Naive thymus-derived CD4-positive, alpha-beta T cell (primary cell): ENCODE measurements at regions of chr15 and their contacts with region 1.

Region 1: DNA sequence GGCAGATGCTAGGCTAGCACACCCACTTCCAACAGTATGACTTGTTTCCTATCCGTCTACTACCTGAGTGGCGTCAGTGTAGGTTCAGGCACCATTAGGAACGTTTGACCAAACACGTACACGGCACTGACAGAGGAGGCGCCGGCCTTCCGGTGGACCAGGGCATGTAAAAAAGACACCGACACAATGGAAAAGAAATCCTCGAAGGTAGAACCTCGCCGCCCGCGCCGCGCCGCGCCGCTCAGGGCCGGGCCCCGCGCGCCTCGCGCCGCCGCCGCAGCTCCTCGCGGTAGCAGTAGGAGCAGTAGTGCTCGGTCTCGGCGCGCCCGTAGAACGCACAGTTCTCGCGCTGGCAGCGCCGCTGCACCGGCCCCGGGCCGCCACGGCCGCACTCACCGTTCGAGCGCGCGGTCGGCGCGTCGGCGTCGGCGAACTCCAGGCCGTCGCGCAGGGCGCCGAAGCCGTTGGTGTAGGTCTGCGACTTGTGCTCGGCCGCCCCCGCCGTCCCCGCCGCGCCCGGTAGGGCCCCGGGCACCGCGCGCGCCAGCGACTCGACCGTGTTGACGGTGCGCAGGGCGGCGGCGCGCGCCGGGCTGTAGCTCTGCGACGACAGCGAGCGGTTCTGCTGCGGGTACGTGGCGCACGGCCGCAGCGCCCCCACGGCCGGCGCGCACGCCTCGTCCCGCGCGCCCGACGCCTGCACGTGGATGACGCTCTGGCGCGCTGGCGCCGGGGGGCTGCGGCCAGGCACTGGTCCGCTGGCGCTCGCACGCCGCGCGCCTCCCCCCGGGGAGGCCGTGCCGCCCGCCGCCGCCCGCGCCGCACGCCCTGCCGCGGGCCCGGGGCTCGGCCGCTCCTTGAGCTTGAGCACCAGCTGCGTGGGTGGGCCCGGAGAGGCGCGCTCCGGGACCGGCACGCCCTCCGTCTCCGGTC is 156.7 kb downstream of the KLF13 start:
- DNase-seq: peak; percentile 42 to 63 (median 53)
- ATAC-seq: peak; percentile 80
- H3K4me3 ChIP-seq: peak overlapping the region; percentile 59
- H3K4me3 Mint-ChIP-seq: peak overlapping the region; percentile 91 to 97 (median 96)
- H3K27ac ChIP-seq: no peak overlapping the region
- H3K27ac Mint-ChIP-seq: peak overlapping the region; percentile 90 to 97 (median 94)
- H3K4me1 ChIP-seq: peaks cover 26 to 35% of the 10 kb centered on the region in 2 donors
- H3K4me1 Mint-ChIP-seq: peaks cover 25 to 75% (median 54%) of the 10 kb centered on the region in 7 donors
- H3K27me3 ChIP-seq: no peaks in the 10 kb centered on the region
- H3K27me3 Mint-ChIP-seq: no peaks in the 10 kb centered on the region

Region 2: DNA sequence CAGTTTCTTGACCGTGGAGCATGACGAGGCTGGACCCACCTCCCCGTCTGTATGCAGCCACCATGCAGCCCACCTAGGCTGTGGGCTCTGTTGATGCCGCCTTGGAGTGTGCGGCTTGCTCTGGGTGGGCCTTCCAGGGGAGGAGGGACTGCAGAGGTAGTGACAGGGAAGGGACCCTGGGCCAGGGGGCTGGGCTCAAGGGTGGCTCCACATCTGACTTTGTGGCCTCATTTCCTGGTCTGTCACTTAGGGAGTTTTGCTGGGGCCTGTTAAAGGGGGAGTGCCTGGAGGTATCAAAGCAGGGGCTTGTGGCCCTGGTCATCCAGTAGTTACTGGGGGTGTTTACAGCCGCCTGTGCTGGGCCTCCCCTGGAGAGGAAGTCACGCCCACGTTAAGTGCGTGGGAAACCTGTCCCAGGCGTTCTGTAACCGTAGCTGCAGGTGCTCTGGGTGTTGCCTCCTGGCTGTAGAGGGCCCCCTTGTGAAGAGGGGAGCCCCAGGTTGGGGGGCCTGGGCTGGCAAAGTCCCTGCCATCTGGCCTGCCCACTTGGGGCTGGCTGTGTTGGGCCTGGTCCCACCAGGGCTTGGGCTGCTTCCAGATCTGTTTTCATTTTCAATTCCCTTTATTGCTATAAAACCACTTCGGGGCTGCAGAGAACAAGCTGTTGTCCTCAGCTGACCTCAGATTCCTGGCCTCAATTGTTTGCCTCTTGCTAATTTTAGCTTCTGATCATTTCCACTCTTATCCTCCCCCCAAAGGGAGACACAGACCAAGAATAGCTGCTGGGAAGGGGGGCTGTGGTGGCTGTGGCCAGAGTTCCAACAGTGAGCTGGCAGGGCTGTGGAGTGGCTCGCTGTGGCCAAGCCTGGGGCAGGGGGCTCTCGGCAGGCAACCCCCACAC is 130.2 kb before region 1 on chr15:
- CTCF ChIA-PET with region 1: interaction called, 4 read pairs
- POLR2A ChIA-PET with region 1: interaction called, 11 read pairs
- intact Hi-C with region 1: no loop called
- DNase-seq: peak in 7 of 9 donors; percentile 49 to 68 (median 59)
- ATAC-seq: peak; percentile 68
- H3K4me3 ChIP-seq: peak overlapping the region; percentile 47
- H3K4me3 Mint-ChIP-seq: peak overlapping the region; percentile 80 to 88 (median 84)
- H3K27ac ChIP-seq: peak overlapping the region; percentile 94
- H3K27ac Mint-ChIP-seq: peak overlapping the region; percentile 92 to 99 (median 97)
- H3K4me1 ChIP-seq: peaks cover 96 to 99% of the 10 kb centered on the region in 2 donors
- H3K4me1 Mint-ChIP-seq: peaks cover 79 to 100% (median 94%) of the 10 kb centered on the region in 7 donors
- H3K27me3 ChIP-seq: no peaks in the 10 kb centered on the region
- H3K27me3 Mint-ChIP-seq: no peaks in the 10 kb centered on the region

Region 3: DNA sequence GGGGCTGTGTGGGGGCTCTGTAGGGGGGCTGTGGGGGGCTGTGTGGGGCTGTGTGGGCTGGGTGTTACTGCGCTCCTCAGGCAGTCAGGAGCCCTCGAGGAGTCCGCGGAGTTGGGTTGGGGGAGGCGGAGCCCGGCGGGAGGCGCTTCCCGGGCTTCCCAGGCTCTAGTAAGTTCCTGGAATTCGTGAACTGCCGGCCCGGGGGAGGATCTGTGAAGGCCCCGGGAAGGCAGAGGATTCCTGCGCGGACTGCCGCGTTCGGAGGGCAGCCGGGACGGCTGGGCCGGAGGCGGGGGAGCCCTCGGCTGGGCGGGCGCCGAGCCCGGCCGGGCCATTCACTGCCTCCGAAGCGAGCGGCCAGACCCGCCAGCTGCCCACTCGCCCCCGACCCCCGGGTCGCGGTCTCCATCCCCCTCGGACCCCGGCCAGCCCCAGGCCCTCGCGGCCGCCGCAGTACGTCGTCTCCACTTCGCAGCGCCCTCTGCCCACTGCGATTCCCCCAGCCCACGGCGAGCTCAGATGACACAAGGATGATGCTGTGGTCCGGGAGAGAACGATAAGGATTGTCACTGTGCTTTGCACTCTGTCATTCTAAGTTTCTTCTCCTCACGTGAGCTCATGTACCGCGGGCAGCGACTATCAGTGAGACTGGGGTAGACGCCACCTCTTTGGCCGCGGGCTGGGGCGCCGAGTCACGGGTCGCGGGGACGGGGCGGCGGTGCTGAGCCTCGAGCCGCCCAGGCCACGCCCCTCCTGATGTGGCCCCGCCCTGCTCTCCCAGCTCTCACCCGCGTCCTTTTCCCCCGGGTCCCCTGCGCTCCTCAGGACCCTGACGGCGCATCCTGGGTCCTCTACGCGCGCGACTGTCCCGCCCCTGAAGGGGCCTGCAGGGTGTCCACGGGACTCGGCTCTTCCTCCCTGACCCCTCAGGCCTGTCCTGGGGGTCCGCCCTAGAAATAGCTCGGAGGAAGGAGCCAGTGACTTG is 91.3 kb before region 1 on chr15:
- CTCF ChIA-PET with region 1: interaction called, 4 read pairs
- POLR2A ChIA-PET with region 1: interaction called, 4 read pairs
- intact Hi-C with region 1: loop called (anchors 5 kb)
- DNase-seq: peak; percentile 61 to 87 (median 73)
- ATAC-seq: peak; percentile 91
- H3K4me3 ChIP-seq: peak overlapping the region; percentile 72
- H3K4me3 Mint-ChIP-seq: peak overlapping the region; percentile 81 to 95 (median 90)
- H3K27ac ChIP-seq: peak overlapping the region; percentile 68
- H3K27ac Mint-ChIP-seq: peak overlapping the region; percentile 79 to 95 (median 88)
- H3K4me1 ChIP-seq: peaks cover 13 to 30% of the 10 kb centered on the region in 2 donors
- H3K4me1 Mint-ChIP-seq: peaks cover 21 to 61% (median 46%) of the 10 kb centered on the region in 7 donors
- H3K27me3 ChIP-seq: no peaks in the 10 kb centered on the region
- H3K27me3 Mint-ChIP-seq: no peaks in the 10 kb centered on the region

Region 4: DNA sequence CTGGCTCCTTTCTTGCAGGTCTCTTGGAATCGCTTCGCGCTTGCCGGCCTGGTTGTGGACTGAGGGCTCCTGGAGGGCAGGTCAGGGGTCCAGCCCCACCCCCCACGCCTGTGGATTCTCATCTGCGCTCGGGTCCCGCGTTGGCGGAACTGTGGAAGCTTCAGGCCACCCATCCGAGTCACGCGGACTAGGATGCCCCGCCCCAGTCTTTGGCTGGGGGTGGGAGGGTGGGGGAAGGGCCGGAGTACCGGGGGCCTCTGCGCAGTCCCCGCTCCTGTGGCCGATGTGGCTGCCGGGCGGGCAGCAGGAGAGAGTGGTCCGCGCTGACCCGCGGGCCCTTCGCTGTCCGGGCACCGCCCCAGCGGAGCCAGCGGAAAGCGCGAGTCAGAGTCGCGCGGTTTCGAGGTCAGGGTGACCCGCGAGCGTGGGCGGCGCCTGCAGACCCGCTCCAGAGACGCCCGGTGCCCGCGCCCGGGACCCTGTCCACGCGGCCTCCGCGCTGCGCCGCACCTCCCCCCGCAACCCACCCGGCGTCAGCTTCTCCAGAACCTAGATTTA is 42.5 kb before region 1 on chr15:
- CTCF ChIA-PET with region 1: interaction called, 65 read pairs
- POLR2A ChIA-PET with region 1: interaction called, 54 read pairs
- intact Hi-C with region 1: loop called (anchors 1 kb)
- DNase-seq: peak in 3 of 9 donors; percentile 31 to 74 (median 42)
- ATAC-seq: peak; percentile 63
- H3K4me3 ChIP-seq: peak overlapping the region; percentile 43
- H3K4me3 Mint-ChIP-seq: peak overlapping the region; percentile 65 to 87 (median 77)
- H3K27ac ChIP-seq: peak overlapping the region; percentile 64
- H3K27ac Mint-ChIP-seq: peak overlapping the region; percentile 51 to 100 (median 84)
- H3K4me1 ChIP-seq: peaks cover 32 to 50% of the 10 kb centered on the region in 2 donors
- H3K4me1 Mint-ChIP-seq: peaks cover 22 to 71% (median 58%) of the 10 kb centered on the region in 7 donors
- H3K27me3 ChIP-seq: no peaks in the 10 kb centered on the region
- H3K27me3 Mint-ChIP-seq: no peaks in the 10 kb centered on the region

Region 5: DNA sequence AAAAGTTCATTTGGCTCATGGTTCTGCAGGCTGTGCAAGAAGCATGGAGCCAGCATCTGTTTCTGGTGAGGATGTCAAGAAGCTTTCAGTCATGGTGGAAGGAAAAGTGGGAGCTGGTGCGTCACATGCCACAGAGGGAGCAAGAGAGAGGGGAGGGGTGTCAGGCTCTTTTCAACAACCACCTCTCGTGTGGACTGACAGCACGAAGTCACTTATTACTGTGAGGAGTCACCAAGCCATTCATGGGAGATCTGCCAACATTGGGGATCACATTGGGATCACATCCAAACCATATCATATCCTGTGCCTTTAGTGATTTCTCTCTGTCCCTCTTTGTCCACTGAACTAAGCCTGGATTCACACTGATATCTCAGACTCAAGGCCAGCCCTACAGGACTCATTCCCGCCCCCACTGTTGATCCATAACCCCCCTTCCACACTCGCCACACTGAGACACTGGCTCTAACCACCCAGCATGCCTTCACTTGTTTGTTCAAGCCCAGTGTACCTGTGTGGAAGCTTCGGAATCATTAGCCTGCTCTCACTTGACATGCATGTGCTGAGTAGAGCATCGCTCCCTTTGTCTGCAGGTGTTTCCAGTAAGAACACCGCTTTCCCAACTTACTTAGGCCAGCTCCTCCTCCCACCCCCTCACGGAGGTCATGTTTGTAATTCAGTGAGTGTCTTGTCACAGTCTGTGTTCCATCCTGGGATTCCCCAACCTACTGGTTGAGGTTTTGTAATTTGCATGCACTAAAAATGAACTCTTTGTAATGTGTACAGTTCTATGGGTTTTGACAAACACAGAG is 24.5 kb before region 1 on chr15:
- CTCF ChIA-PET with region 1: interaction called, 3 read pairs
- POLR2A ChIA-PET with region 1: interaction called, 3 read pairs
- intact Hi-C with region 1: loop called in 1 of 2 experiments (anchors 2 kb)
- DNase-seq: peak in 3 of 9 donors; percentile 19 to 64 (median 32)
- ATAC-seq: peak; percentile 83
- H3K4me3 ChIP-seq: no peak overlapping the region
- H3K4me3 Mint-ChIP-seq: peak overlapping the region in 4 of 10 donors; percentile 0 to 72 (median 4)
- H3K27ac ChIP-seq: no peak overlapping the region
- H3K27ac Mint-ChIP-seq: peak overlapping the region in 7 of 9 donors; percentile 4 to 82 (median 70)
- H3K4me1 ChIP-seq: peaks cover 0 to 8% of the 10 kb centered on the region in 2 donors
- H3K4me1 Mint-ChIP-seq: peaks cover 5 to 33% (median 28%) of the 10 kb centered on the region in 7 donors
- H3K27me3 ChIP-seq: no peaks in the 10 kb centered on the region
- H3K27me3 Mint-ChIP-seq: no peaks in the 10 kb centered on the region

Region 6: GRCh38 chr15:31472636-31473384 is 10.5 kb before region 1 on chr15:
- CTCF ChIA-PET with region 1: interaction called, 10 read pairs
- POLR2A ChIA-PET with region 1: interaction called, 62 read pairs
- intact Hi-C with region 1: loop called (anchors 1 kb)
- DNase-seq: peak in 8 of 9 donors; percentile 48 to 71 (median 66)
- ATAC-seq: peak; percentile 90
- H3K4me3 ChIP-seq: peak overlapping the region; percentile 28
- H3K4me3 Mint-ChIP-seq: peak overlapping the region; percentile 69 to 90 (median 79)
- H3K27ac ChIP-seq: peak overlapping the region; percentile 66
- H3K27ac Mint-ChIP-seq: peak overlapping the region; percentile 90 to 96 (median 93)
- H3K4me1 ChIP-seq: peaks cover 29 to 34% of the 10 kb centered on the region in 2 donors
- H3K4me1 Mint-ChIP-seq: peaks cover 22 to 62% (median 58%) of the 10 kb centered on the region in 7 donors
- H3K27me3 ChIP-seq: no peaks in the 10 kb centered on the region
- H3K27me3 Mint-ChIP-seq: no peaks in the 10 kb centered on the region